HCT116 (cell line): ENCODE measurements at regions of chr4 and their contacts with region 1.

Region 1: DNA sequence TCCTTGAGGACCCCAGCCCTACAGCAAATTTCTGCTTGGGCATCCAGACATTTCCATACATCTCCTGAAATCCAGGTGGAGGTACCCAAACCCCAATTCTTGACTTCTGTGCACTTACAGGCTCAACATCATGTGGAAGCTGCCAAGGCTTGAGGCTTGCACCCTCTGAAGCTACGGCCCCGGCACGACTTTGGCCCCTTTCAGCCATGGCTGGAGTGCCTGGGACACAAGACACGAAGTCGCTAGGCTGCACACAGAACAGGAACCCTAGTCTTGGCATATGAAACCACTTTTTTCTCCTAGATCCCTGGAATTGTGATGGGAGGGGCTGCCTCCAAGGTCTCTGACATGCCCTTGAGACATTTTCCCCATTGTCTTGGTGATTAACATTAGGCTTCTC is 1417.7 kb downstream of the ARAP2 start:
- DNase-seq: no peak
- ATAC-seq: no peak
- H3K4me3 ChIP-seq: no peak overlapping the region
- H3K27ac ChIP-seq: no peak overlapping the region
- H3K4me1 ChIP-seq: no peaks in the 10 kb centered on the region
- H3K27me3 ChIP-seq: no peaks in the 10 kb centered on the region
- CTCF ChIP-seq: no peak
- POLR2A ChIP-seq: no peak
- RAD21 ChIP-seq: no peak

Region 2: DNA sequence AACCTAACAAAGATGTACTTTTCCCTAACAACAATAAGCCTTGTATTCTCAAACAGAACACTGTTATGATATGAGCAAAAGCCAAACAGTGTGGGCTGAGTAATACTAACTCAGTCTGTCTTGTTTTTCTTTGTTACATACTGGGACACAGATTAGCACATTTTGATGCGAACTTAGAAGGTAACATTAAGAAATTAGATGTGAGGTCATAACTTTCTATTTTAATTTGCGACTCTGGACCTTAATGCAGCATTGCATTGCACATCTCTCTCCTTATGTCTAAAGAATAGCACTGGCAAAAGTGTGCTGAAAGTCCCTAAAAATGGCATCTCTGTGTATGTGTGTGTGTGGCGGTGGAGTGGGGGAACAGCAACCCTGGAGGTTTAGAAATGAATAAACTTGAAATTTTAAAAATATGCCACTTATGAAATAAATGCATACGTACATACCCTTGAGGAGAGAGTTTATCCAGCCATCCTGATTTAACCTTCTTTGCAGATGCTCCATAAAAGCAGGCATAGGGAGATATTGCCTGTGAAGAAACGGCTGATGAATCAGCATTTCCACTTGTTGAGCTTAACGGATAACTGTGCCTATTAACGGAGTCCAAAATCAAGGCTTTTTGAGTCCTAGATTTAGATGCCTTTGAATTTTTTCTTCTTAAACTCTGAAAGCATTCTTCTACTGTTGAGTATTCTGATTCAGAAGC is 1383.4 kb after region 1 on chr4:
- CTCF ChIA-PET with region 1: no interaction called
- POLR2A ChIA-PET with region 1: no interaction called
- RAD21 ChIA-PET with region 1: no interaction called
- intact Hi-C with region 1: loop called (anchors 5 kb)
- DNase-seq: no peak
- ATAC-seq: no peak
- H3K4me3 ChIP-seq: no peak overlapping the region
- H3K27ac ChIP-seq: no peak overlapping the region
- H3K4me1 ChIP-seq: no peaks in the 10 kb centered on the region
- H3K27me3 ChIP-seq: no peaks in the 10 kb centered on the region
- CTCF ChIP-seq: no peak
- POLR2A ChIP-seq: no peak
- RAD21 ChIP-seq: no peak